Mammary epithelial cell (primary cell): ENCODE measurements at regions of chr1 and their contacts with region 1.

Region 1: DNA sequence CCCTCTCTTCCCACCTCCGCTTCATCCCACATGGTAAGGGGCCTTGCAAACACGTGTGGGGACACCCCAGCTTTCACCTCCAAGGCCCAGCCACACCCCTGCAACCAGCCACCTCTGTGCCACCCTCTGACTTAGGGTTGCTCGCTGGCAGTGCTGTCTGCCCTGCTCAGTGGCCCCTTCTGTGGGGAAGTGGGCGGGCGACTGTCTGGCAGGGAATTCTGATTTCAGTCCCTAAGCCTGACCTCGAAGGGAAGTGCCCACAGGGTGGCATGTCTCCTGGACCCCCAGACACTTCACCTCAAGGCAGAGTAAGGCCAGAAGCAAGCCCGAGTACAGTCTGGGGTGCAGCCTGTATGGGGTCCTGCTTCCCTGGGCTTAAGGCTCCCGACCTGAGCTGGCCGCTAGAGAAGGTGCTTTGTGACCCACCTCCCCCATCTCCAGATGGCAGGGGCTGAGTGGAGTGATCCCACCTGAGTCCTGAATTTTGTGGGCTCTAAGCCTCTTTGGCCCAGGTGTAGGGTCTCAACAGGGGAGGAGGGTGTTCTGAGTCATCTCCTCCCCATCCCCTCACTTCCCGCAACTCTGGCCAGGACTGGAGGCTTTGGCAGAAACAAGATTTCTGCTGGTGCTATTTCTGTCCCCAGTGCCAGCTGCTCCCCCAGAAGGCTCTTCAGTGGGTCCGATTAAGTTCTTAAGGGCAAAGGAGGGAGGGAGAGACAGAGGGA is 7.0 kb downstream of the RD3 start:
- DNase-seq: no peak
- H3K4me3 ChIP-seq: no peak overlapping the region
- H3K27ac ChIP-seq: no peak overlapping the region
- H3K4me1 ChIP-seq: no peaks in the 10 kb centered on the region
- H3K27me3 ChIP-seq: peaks cover under 1% of the 10 kb centered on the region
- CTCF ChIP-seq: no peak

Region 2: GRCh38 chr1:211210052-211210451 is 274.9 kb before region 1 on chr1:
- CTCF ChIA-PET with region 1: no interaction called
- dilution Hi-C with region 1: no loop called
- in situ Hi-C with region 1: no loop called
- intact Hi-C with region 1: no loop called
- DNase-seq: peak; percentile 5
- H3K4me3 ChIP-seq: no peak overlapping the region
- H3K27ac ChIP-seq: no peak overlapping the region
- H3K4me1 ChIP-seq: no peaks in the 10 kb centered on the region
- H3K27me3 ChIP-seq: no peaks in the 10 kb centered on the region
- CTCF ChIP-seq: no peak

Region 3: DNA sequence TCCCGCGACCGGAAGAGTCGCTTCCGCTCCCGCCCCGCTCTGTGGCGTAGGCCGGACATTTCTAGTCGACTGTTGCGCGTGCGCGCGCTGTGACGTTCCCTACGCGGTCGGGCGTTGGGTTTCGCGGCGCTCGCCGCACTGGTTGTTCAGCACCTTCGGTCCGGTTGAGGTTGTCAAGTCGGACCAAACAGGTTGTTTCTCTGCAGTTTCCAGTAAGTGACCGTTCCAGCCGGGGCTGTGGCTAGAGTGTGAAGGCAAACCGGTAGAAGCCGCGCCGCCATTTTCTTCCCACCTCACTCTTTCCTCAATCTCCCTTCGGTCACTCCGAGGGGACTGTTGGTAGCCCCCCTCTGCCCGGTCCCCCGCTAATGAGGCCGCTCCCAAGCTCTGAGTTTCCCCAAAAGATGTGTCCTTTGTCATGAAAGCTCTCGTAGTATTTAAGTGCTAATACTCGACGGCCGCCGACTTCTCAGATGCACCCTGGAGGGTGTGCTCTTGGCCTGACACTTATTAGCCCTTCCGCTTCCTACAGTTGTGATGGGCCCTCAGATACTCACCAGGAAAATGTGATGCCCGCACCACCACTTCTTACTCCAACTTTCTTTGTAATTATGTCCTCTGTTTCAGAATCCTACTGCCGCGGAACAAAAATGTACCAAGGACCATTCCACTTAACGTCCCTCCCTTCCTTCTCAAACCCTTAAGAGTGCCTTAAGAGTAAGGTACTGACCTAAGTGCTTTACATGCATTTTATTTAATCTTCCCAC is 102.0 kb before region 1 on chr1:
- CTCF ChIA-PET with region 1: no interaction called
- dilution Hi-C with region 1: loop called (anchors 5 kb)
- in situ Hi-C with region 1: no loop called
- intact Hi-C with region 1: no loop called
- DNase-seq: peak; percentile 82
- H3K4me3 ChIP-seq: peak overlapping the region; percentile 52 to 70 (median 56)
- H3K27ac ChIP-seq: peak overlapping the region; percentile 83
- H3K4me1 ChIP-seq: peaks cover 4% of the 10 kb centered on the region
- H3K27me3 ChIP-seq: no peaks in the 10 kb centered on the region
- CTCF ChIP-seq: no peak

Region 4: DNA sequence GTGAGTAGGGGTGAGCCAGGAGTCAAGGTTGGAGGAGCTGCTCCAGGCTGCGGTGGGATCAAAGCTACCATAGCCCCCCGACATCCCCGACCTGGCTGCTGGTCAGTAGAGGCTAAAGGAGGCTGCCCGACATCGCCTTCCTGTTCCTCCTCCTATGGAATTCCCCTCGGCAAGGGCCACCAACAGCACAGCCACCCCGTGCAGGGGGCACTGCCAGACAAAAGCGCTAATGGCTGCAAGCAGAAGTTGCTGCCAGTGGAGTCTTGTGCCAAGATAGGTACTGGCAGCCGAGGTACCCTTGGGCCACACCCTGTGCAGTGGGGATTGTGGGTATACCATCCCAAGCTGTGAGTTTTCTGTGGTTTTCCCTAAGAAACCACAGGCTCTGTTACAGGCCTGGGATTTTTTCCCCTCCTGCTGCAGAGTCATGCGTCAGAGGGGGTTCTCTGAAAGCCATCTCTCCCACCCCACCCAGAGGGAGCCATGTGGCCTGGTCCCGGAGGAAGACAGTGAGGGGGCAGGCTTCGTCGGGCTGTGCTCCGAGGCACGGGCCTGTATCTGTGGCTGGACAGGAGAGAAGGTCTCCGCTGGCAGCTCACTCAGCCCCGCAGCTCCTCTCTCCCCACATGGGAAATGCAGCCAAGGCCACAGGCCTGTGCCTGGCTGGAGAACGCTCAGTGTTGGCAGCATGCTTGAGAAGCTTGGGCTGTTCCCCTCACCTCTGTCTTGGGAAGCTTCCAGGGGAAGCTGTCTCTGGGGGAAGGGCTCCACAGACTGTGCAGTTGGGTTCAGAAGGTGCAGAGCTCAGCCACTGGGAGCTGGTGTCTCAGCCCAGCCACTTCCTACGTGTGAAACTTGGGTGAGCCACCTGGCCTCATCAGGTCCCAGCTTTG is 148.0 kb after region 1 on chr1:
- CTCF ChIA-PET with region 1: no interaction called
- dilution Hi-C with region 1: loop called (anchors 10 kb)
- in situ Hi-C with region 1: no loop called
- intact Hi-C with region 1: no loop called
- DNase-seq: peak; percentile 95
- H3K4me3 ChIP-seq: no peak overlapping the region
- H3K27ac ChIP-seq: peak overlapping the region; percentile 59
- H3K4me1 ChIP-seq: peaks cover 25% of the 10 kb centered on the region
- H3K27me3 ChIP-seq: peaks cover 6% of the 10 kb centered on the region
- CTCF ChIP-seq: no peak

Region 5: DNA sequence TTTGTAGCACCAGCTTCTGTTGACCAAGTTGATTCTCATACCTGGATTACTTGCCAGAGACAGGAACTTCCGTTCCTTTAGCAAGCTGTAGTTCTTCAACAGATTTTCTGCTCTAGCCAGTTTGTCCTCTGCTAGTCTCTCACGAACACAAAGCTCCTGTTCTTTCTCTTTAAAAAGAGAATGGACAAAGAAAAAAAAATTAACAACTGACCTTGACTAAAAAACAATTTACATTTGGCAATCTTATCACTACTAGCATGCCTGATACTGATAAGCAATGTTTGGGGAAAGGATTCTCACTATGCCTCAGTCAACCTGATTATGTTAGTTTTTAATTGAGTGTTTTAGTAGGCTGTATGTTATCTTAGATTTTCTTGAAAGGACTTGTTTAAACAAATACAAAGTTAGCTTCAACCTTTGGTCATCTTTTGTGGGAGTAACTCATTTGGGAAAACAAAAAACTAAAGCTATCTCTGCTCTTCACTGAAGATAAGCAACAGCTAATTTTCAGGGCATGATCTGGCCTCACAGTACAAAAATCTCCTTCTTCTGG is 182.2 kb after region 1 on chr1:
- CTCF ChIA-PET with region 1: no interaction called
- dilution Hi-C with region 1: loop called (anchors 10 kb)
- in situ Hi-C with region 1: no loop called
- intact Hi-C with region 1: no loop called
- DNase-seq: no peak
- H3K4me3 ChIP-seq: no peak overlapping the region
- H3K27ac ChIP-seq: no peak overlapping the region
- H3K4me1 ChIP-seq: no peaks in the 10 kb centered on the region
- H3K27me3 ChIP-seq: no peaks in the 10 kb centered on the region
- CTCF ChIP-seq: no peak